PC-9 (cell line): ENCODE measurements at regions of chr5 and their contacts with region 1.

Region 1: DNA sequence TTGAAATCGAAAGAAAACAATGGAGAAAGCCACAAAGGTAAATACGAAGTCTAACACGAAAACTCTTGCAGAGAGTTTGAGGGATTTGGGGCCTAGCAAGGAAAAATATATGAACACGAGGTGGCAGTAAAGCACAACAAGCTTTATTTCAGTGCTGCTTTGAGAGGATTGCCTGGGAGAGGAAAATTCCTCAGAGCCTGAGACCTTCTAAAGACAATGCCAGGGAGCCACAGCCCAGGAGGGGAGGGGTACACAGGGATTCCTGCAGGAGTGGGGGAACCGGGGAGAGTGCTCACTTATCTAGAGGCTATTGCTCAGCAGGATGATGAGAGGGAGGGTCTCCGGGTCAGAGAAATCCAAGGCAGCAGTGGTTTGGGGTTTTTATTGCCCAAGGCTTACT is 134.9 kb upstream of the ADCY2 start:
- DNase-seq: peak; percentile 7 to 39
- H3K4me3 ChIP-seq: no peak overlapping the region
- H3K27ac ChIP-seq: no peak overlapping the region
- H3K4me1 ChIP-seq: no peaks in the 10 kb centered on the region
- H3K27me3 ChIP-seq: peaks cover 38% of the 10 kb centered on the region
- CTCF ChIP-seq: peak; percentile 76

Region 2: DNA sequence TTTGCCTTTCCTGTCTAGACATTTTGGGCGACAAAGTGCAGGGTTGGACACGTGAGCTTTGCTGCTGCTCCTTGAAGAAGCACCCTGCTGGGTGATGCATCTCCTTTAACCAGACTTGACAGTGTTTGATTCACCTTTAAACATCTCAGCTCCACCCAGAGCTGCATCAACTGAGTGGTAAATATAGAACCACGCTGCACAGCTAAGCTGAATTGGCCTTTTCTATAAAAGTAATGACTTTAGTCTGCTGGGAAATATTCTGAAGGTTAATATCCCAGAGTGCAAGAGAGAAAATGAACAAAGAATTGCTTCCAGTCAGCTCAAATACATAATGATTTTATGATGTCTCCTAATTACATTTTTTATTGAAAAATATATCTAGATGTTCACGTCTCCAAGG is 129.4 kb before region 1 on chr5:
- CTCF ChIA-PET with region 1: no interaction called
- POLR2A ChIA-PET with region 1: no interaction called
- intact Hi-C with region 1: no loop called
- DNase-seq: no peak
- H3K4me3 ChIP-seq: no peak overlapping the region
- H3K27ac ChIP-seq: no peak overlapping the region
- H3K4me1 ChIP-seq: no peaks in the 10 kb centered on the region
- H3K27me3 ChIP-seq: peaks cover 5% of the 10 kb centered on the region
- CTCF ChIP-seq: no peak

Region 3: DNA sequence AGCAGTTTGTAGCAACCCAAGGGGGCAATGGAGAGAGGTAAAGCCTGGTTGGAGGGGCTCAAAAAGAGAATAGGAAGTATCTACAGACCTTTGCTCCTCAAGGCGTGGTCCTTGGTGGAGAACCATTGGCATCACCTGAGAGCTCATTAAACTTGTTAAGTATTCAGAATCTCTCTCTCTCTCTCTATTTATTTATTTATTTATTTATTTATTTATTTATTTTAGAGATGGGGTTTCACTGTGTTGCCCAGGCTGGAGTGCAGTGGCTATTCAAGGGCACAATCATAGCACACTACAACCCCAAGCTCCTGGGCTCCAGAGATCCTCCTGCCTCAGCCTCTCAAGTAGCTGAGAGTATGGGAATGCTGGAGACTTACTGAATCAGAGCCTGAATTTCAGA is 58.2 kb before region 1 on chr5:
- CTCF ChIA-PET with region 1: no interaction called
- POLR2A ChIA-PET with region 1: no interaction called
- intact Hi-C with region 1: no loop called
- DNase-seq: no peak
- H3K4me3 ChIP-seq: no peak overlapping the region
- H3K27ac ChIP-seq: no peak overlapping the region
- H3K4me1 ChIP-seq: no peaks in the 10 kb centered on the region
- H3K27me3 ChIP-seq: no peaks in the 10 kb centered on the region
- CTCF ChIP-seq: no peak

Region 4: GRCh38 chr5:7464182-7464581 is 203.1 kb after region 1 on chr5:
- CTCF ChIA-PET with region 1: no interaction called
- POLR2A ChIA-PET with region 1: no interaction called
- intact Hi-C with region 1: no loop called
- DNase-seq: no peak
- H3K4me3 ChIP-seq: no peak overlapping the region
- H3K27ac ChIP-seq: no peak overlapping the region
- H3K4me1 ChIP-seq: no peaks in the 10 kb centered on the region
- H3K27me3 ChIP-seq: peaks cover 3% of the 10 kb centered on the region; the same call in 1 of the 2 replicates
- CTCF ChIP-seq: no peak

Region 5: GRCh38 chr5:7592910-7593309 is 331.9 kb after region 1 on chr5:
- CTCF ChIA-PET with region 1: no interaction called
- POLR2A ChIA-PET with region 1: no interaction called
- intact Hi-C with region 1: loop called (anchors 1 kb)
- DNase-seq: no peak
- H3K4me3 ChIP-seq: no peak overlapping the region
- H3K27ac ChIP-seq: no peak overlapping the region
- H3K4me1 ChIP-seq: no peaks in the 10 kb centered on the region
- H3K27me3 ChIP-seq: peaks cover 13% of the 10 kb centered on the region; the same call in 1 of the 2 replicates
- CTCF ChIP-seq: peak; percentile 54; the same call in 1 of the 2 replicates

Region 6: DNA sequence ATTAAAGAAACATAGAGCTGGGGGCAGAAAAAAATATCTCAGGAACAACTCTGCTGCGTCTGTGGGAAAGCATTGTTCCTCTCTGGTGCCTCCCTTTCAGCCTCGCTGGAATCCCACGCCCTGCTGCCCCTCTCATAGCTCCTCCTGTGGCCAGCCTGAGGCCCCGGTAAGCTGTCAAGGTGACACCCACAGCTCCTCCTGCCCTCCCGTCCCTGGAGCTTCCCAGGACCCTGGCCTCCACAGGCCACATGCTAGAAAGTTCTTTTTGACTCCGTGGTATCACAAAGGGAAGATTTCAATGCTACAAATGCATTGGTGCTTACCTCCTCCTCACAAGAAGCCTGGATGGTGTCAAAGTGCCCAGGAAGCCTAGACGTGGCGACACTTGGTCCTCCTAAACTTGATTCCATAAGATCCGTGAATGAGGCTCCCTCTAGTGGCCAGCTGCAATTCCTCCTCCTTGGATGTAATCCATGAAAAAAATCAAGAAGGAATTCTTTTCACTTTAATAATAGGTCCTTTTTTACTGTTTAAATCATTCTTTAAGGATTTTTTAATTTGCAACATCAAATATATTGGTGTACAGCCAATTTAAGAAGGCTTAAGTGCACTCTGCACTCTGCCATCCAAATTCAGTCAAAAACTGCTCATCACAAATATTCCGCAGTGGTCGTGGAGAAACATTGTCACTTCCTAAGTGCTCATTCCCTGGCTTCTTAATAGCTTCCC is 485.0 kb after region 1 on chr5:
- CTCF ChIA-PET with region 1: no interaction called
- POLR2A ChIA-PET with region 1: no interaction called
- intact Hi-C with region 1: loop called (anchors 1 kb)
- DNase-seq: peak; percentile 52 to 76
- H3K4me3 ChIP-seq: no peak overlapping the region
- H3K27ac ChIP-seq: no peak overlapping the region
- H3K4me1 ChIP-seq: no peaks in the 10 kb centered on the region
- H3K27me3 ChIP-seq: peaks cover 40% of the 10 kb centered on the region
- CTCF ChIP-seq: peak; percentile 98

Region 7: GRCh38 chr5:7815892-7816534 is 555.0 kb after region 1 on chr5:
- CTCF ChIA-PET with region 1: no interaction called
- POLR2A ChIA-PET with region 1: no interaction called
- intact Hi-C with region 1: loop called (anchors 1 kb)
- DNase-seq: peak in 1 of 2 experiments; percentile 77
- H3K4me3 ChIP-seq: no peak overlapping the region
- H3K27ac ChIP-seq: no peak overlapping the region
- H3K4me1 ChIP-seq: no peaks in the 10 kb centered on the region
- H3K27me3 ChIP-seq: peaks cover 96% of the 10 kb centered on the region
- CTCF ChIP-seq: peak; percentile 92

Region 8: DNA sequence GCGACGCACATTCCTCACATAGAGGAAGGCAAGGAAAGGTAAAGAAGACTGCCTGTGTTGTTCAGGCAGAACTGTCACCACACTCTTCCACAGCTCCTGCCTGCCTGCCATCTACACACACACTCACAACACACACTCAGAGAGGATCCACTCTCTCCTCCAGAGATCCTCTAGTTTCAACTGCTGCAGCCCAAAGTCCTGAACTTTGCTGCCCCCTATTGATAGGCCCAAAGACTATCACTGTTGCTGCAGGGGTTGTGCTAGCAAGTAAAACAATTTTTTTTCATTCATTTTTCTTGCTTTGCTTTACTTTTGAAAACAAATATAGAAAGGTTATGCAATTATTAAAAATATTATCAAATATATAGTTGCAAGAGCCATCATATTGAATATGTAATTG is 595.8 kb after region 1 on chr5:
- CTCF ChIA-PET with region 1: no interaction called
- POLR2A ChIA-PET with region 1: interaction called, 29 read pairs
- intact Hi-C with region 1: loop called (anchors 5 kb)
- DNase-seq: peak in 1 of 2 experiments; percentile 25
- H3K4me3 ChIP-seq: no peak overlapping the region
- H3K27ac ChIP-seq: no peak overlapping the region
- H3K4me1 ChIP-seq: 0 out of 2 replicates have a peak, but pooled peaks cover 6% of the 10 kb centered on the region
- H3K27me3 ChIP-seq: peaks cover 12% of the 10 kb centered on the region; the same call in 1 of the 2 replicates
- CTCF ChIP-seq: peak; percentile 68